Gastrocnemius medialis (tissue), 4 donors: ENCODE measurements at regions of chr15 and their contacts with region 1.

Region 1: DNA sequence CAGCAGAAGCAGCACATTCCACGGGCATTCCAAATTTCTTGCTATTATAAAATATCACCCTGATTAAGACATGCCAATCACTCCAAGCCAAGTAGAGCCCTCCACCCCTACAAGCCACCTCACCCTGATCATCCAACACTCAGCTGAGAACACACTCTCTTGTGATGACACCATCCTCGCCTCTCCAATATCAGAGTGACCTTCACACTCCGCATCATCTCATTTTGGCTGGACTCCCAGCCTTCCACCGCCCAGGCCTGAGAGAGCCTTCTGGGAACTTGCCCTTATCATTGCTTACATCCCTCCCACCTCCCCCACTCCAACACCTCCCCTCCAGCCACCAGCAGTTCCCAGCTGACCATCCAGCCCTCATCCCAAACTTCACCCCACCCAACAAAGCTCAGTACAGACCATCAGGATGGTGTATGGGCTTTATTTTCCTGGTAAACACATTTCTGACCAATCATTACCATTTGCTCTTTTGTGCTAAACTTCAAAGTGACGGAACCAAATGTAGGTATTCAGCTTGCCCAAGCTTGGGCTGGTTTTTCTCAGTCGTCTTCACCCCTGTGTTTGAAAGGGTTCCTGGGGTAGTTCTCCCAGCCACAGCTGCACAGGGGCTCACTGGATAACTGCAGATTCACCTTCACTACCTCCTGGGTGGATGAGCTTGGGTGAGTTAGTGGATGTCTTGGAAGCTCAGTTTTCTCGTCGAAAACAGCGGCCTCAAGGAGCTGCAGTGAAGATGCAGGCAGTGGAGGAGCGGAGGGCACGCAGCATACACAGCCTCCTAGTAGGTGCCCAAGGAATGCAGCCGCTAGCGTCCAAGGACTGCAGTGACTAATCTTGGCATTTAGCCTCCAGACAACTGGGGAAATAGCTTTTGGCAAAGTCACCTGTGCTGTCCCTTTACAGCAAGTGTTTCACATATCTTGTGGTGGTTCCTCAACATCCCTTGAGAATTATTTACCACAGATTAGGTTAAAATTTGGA is 115.1 kb downstream of the LIPC start:
- DNase-seq: peak; percentile 73 to 85
- ATAC-seq: peak; percentile 96 to 97
- H3K4me3 ChIP-seq: no peak overlapping the region
- H3K27ac ChIP-seq: peak overlapping the region; percentile 47 to 67 (median 52)
- H3K4me1 ChIP-seq: peaks cover 22 to 36% of the 10 kb centered on the region in 2 donors
- H3K27me3 ChIP-seq: no peaks in the 10 kb centered on the region
- CTCF ChIP-seq: no peak
- POLR2A ChIP-seq: no peak

Region 2: DNA sequence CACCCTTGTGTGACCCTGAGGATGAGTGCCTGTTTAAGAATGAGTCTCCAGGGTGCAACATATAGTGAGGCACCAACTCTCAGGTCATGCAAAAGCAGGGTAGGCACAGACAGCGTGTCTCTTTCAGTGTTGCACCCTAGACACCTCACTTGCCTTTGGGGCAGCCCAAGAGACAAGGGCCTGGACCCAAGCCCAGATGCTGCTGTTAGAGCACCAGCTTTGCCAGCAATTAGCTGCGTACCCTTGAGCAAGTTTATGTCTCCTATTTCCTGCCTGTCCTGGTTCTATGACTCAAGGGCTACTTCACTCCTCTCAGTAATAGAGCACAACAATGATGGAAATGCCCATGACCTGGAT is 286.0 kb before region 1 on chr15:
- in situ Hi-C with region 1: no loop called
- intact Hi-C with region 1: loop called (anchors 5 kb)
- DNase-seq: peak; percentile 74 to 89
- ATAC-seq: peak; percentile 81 to 82
- H3K4me3 ChIP-seq: no peak overlapping the region
- H3K27ac ChIP-seq: peak overlapping the region; percentile 90 to 96 (median 94)
- H3K4me1 ChIP-seq: peaks cover 40 to 48% of the 10 kb centered on the region in 2 donors
- H3K27me3 ChIP-seq: no peaks in the 10 kb centered on the region
- CTCF ChIP-seq: peak in 1 of 5 experiments; percentile 0
- POLR2A ChIP-seq: no peak

Region 3: DNA sequence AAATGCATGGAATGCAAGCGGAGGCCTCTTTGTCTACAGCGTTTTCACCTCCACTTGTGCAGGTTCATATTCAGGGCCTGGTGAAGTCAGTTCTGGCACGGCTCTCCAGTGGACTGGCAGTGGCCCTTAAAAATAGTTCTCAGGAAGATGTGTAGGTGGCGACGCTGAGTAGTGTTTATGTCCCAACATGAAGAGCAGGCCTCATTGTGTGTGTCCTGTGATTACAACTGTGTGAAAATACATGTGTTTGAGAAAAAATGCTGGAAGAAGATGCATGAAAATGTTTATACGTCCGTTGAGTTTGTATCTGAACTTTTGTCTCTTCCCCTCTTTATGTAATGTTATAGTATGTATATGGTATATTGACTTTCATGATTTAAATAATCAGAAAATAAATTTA is 108.0 kb before region 1 on chr15:
- in situ Hi-C with region 1: no loop called
- intact Hi-C with region 1: loop called (anchors 5 kb)
- DNase-seq: peak in 1 of 2 donors; percentile 51
- ATAC-seq: peak; percentile 55 to 69
- H3K4me3 ChIP-seq: no peak overlapping the region
- H3K27ac ChIP-seq: peak overlapping the region in 3 of 4 donors; percentile 64 to 86 (median 75)
- H3K4me1 ChIP-seq: peaks cover 27 to 33% of the 10 kb centered on the region in 2 donors
- H3K27me3 ChIP-seq: no peaks in the 10 kb centered on the region
- CTCF ChIP-seq: peak in 2 of 5 experiments; percentile 13 to 18
- POLR2A ChIP-seq: no peak

Region 4: DNA sequence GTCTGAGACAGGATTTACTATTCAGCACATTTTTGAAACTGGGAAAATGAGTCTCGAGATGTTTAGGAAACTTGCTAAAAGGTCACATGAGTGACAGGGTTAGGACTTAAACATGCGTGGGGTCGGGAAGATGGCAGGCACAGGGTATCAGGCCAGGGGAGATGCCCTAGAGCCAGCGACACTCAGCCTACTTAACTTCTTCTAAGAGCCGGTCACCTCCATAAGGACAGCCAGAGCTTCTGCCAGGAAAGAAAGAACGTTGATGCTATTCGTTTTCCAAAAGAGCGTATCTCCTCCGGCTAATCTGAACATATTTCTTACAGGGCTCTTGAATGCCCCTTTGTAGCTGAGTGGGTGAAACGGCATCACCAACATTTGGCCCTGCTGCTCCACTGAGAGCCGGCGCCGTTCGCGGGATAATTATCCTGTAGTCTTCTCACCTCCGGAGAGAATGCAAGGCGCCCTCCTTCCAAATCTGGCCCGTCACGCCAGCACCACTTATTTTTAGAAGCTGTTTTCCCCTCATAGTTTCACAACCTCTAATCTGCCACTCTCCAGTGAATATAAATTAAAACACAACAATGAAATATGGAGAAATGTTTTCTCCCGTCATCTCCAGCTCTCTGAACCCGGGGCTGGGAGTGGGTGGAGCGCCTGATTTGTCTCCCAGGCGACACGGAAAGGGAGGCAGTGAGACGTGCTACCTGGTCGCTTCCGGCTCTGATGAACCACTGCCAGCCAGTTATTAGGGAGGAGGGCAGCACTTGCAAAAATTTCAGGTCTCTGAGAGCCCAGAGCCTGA is 56.6 kb before region 1 on chr15:
- in situ Hi-C with region 1: no loop called
- intact Hi-C with region 1: loop called (anchors 5 kb)
- DNase-seq: no peak
- ATAC-seq: peak; percentile 46 to 56
- H3K4me3 ChIP-seq: peak overlapping the region in 3 of 4 donors; percentile 21 to 34 (median 29)
- H3K27ac ChIP-seq: peak overlapping the region; percentile 5 to 37 (median 30)
- H3K4me1 ChIP-seq: peaks cover 12 to 17% of the 10 kb centered on the region in 2 donors
- H3K27me3 ChIP-seq: no peaks in the 10 kb centered on the region
- CTCF ChIP-seq: no peak
- POLR2A ChIP-seq: no peak

Region 5: DNA sequence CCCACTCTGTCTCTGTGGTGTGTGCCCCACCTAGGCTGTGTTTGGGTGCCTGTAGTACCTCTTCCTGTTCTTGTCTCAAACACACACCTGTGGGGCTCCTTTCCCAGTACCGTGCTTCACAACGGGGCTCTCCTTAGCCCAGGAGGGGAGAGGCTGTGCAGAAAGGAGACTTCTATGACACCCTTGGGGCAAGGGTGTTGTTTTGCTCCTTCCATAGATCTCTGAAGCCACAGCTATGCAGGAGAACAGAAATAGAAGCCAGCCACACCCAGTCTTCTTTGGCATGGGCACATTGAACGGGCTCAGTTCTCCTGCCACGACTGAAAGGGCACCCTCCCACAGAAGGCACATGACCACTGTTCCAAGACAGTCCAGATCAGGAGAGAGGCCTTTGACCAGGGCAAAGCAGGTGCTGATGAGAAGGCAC is 40.9 kb before region 1 on chr15:
- in situ Hi-C with region 1: no loop called
- intact Hi-C with region 1: loop called (anchors 5 kb)
- DNase-seq: peak; percentile 88 to 90
- ATAC-seq: peak; percentile 92 to 94
- H3K4me3 ChIP-seq: no peak overlapping the region
- H3K27ac ChIP-seq: peak overlapping the region; percentile 71 to 82 (median 80)
- H3K4me1 ChIP-seq: peaks cover 19 to 27% of the 10 kb centered on the region in 2 donors
- H3K27me3 ChIP-seq: no peaks in the 10 kb centered on the region
- CTCF ChIP-seq: no peak
- POLR2A ChIP-seq: peak in 1 of 2 donors; percentile 5